ENCODE measurements at regions of chr11 and their contacts with region 1.

Region 1: DNA sequence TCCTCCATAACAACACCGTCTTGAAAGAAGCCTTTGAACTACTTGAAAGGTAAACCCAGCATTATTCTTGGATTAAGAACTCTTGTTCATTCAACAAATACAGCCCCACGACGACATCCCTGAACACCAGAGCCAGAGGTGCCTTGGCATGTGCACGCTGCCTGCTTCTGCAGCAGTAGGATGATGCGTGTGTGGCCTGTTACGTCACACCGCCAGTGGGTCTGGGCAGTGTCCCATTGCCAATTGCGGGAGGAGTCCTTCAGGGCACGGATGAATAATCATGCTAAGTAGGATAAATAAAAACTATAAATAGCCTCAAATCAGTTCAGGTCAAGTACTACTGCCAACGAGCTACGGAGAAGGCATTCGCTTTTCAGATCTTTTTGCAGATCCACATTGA is 380.5 kb downstream of the SHANK2 start:
- DNase-seq: peak; percentile 90
- H3K4me3 ChIP-seq: no peak overlapping the region
- H3K27ac ChIP-seq: peak overlapping the region in 2 of 4 donors; percentile 12 to 20
- H3K4me1 ChIP-seq: peaks cover 0 to 21% (median 18%) of the 10 kb centered on the region in 4 donors
- H3K27me3 ChIP-seq: no peaks in the 10 kb centered on the region
- CTCF ChIP-seq: no peak
- EP300 ChIP-seq: peak in 3 of 4 donors; percentile 49 to 80 (median 66)
- POLR2A ChIP-seq: no peak

Region 2: GRCh38 chr11:70826541-70827335 is 45.1 kb before region 1 on chr11:
- intact Hi-C with region 1: loop called (anchors 1 kb)
- DNase-seq: peak; percentile 81
- H3K4me3 ChIP-seq: peak overlapping the region; percentile 31 to 48 (median 43)
- H3K27ac ChIP-seq: peak overlapping the region; percentile 68 to 80 (median 74)
- H3K4me1 ChIP-seq: peaks cover 2 to 41% (median 24%) of the 10 kb centered on the region in 4 donors
- H3K27me3 ChIP-seq: peaks cover 0 to 32% (median 0%) of the 10 kb centered on the region in 3 donors
- CTCF ChIP-seq: no peak
- EP300 ChIP-seq: no peak
- POLR2A ChIP-seq: no peak